Endothelial cell of umbilical vein (primary cell): ENCODE measurements at regions of chr20 and their contacts with region 1.

Region 1: DNA sequence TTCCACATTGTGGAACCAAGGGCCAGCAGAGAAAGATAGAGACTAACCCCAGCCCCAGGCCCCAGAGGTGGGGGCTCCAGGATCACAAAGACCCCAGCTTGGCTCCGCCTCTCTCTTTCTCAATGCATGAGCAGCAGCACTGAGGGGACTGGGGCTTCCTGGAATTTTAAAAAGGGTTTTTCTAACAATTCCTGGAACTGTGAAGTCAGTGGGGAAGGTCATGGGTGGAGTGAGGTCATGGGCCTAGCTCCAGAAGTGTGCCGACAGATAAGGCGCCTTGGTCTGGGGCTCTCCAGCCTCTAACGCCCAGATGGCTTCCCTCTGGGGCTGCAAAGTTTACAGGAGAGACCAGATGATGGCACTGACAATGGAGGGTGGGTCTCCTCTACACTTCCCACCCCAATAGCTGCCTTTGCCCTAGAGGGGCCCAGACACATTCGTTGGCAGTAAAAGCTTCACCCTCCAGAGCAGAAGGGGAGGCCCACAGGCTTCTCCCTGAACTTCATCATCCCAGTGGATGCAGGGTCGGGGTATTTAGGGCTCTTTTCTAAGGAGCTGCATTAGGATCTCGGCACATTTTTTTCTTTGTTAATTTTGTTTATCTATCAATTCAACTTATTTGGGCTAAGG is 46.9 kb upstream of the CD93 start:
- DNase-seq: peak; percentile 87
- H3K4me3 ChIP-seq: no peak overlapping the region
- H3K27ac ChIP-seq: peak overlapping the region; percentile 68
- H3K4me1 ChIP-seq: peaks cover 28% of the 10 kb centered on the region
- H3K27me3 ChIP-seq: no peaks in the 10 kb centered on the region
- CTCF ChIP-seq: no peak
- POLR2A ChIP-seq: no peak

Region 2: GRCh38 chr20:23095499-23095898 is 37.5 kb before region 1 on chr20:
- CTCF ChIA-PET with region 1: no interaction called
- POLR2A ChIA-PET with region 1: no interaction called
- dilution Hi-C with region 1: no loop called
- intact Hi-C with region 1: no loop called
- DNase-seq: peak; percentile 10
- H3K4me3 ChIP-seq: no peak overlapping the region
- H3K27ac ChIP-seq: no peak overlapping the region
- H3K4me1 ChIP-seq: peaks cover 39% of the 10 kb centered on the region
- H3K27me3 ChIP-seq: no peaks in the 10 kb centered on the region
- CTCF ChIP-seq: no peak
- POLR2A ChIP-seq: no peak

Region 3: GRCh38 chr20:23143098-23143497 is 10.1 kb after region 1 on chr20:
- CTCF ChIA-PET with region 1: interaction called, 18 read pairs
- POLR2A ChIA-PET with region 1: no interaction called
- dilution Hi-C with region 1: no loop called
- intact Hi-C with region 1: no loop called
- DNase-seq: peak; percentile 94
- H3K4me3 ChIP-seq: no peak overlapping the region
- H3K27ac ChIP-seq: peak overlapping the region; percentile 88
- H3K4me1 ChIP-seq: peaks cover 77% of the 10 kb centered on the region
- H3K27me3 ChIP-seq: no peaks in the 10 kb centered on the region
- CTCF ChIP-seq: no peak
- POLR2A ChIP-seq: no peak